ENCODE measurements at regions of chr5 and their contacts with region 1.

Region 1: GRCh38 chr5:34929150-34929719 is at the start of gene DNAJC21:
- DNase-seq: peak; percentile 94 to 99 (median 97)
- ATAC-seq: peak; percentile 89
- H3K4me3 ChIP-seq: peak within 1 kb of the TSS; percentile 88
- H3K4me3 Mint-ChIP-seq: peak within 1 kb of the TSS; percentile 99
- H3K27ac ChIP-seq: peak within 1 kb of the TSS; percentile 39 to 72
- H3K27ac Mint-ChIP-seq: peak within 1 kb of the TSS; percentile 95
- H3K4me1 ChIP-seq: peaks cover 21% of the 10 kb centered on the region
- H3K4me1 Mint-ChIP-seq: peaks cover 37% of the 10 kb centered on the region
- H3K27me3 ChIP-seq: no peaks in the 10 kb centered on the region
- H3K27me3 Mint-ChIP-seq: no peaks in the 10 kb centered on the region
- CTCF ChIP-seq: no peak
- total RNA-seq, gene DNAJC21: 47.9 to 50.4 TPM

Region 2: GRCh38 chr5:33401482-33402390 is 1527.5 kb before region 1 on chr5:
- CTCF ChIA-PET with region 1: no interaction called
- POLR2A ChIA-PET with region 1: no interaction called
- intact Hi-C with region 1: no loop called
- DNase-seq: no peak
- ATAC-seq: no peak
- H3K4me3 ChIP-seq: no peak overlapping the region
- H3K4me3 Mint-ChIP-seq: no peak overlapping the region
- H3K27ac ChIP-seq: no peak overlapping the region
- H3K27ac Mint-ChIP-seq: no peak overlapping the region
- H3K4me1 ChIP-seq: no peaks in the 10 kb centered on the region
- H3K4me1 Mint-ChIP-seq: no peaks in the 10 kb centered on the region
- H3K27me3 ChIP-seq: no peaks in the 10 kb centered on the region
- H3K27me3 Mint-ChIP-seq: no peaks in the 10 kb centered on the region
- CTCF ChIP-seq: no peak

Region 3: GRCh38 chr5:34639852-34640605 is 289.2 kb before region 1 on chr5:
- CTCF ChIA-PET with region 1: no interaction called
- POLR2A ChIA-PET with region 1: no interaction called
- intact Hi-C with region 1: no loop called
- DNase-seq: no peak
- ATAC-seq: no peak
- H3K4me3 ChIP-seq: no peak overlapping the region
- H3K4me3 Mint-ChIP-seq: no peak overlapping the region
- H3K27ac ChIP-seq: no peak overlapping the region
- H3K27ac Mint-ChIP-seq: no peak overlapping the region
- H3K4me1 ChIP-seq: no peaks in the 10 kb centered on the region
- H3K4me1 Mint-ChIP-seq: no peaks in the 10 kb centered on the region
- H3K27me3 ChIP-seq: no peaks in the 10 kb centered on the region
- H3K27me3 Mint-ChIP-seq: peaks cover 13% of the 10 kb centered on the region
- CTCF ChIP-seq: no peak

Region 4: GRCh38 chr5:34801949-34802348 is 127.3 kb before region 1 on chr5:
- CTCF ChIA-PET with region 1: no interaction called
- POLR2A ChIA-PET with region 1: no interaction called
- intact Hi-C with region 1: no loop called
- DNase-seq: no peak
- ATAC-seq: no peak
- H3K4me3 ChIP-seq: no peak overlapping the region
- H3K4me3 Mint-ChIP-seq: no peak overlapping the region
- H3K27ac ChIP-seq: no peak overlapping the region
- H3K27ac Mint-ChIP-seq: no peak overlapping the region
- H3K4me1 ChIP-seq: no peaks in the 10 kb centered on the region
- H3K4me1 Mint-ChIP-seq: no peaks in the 10 kb centered on the region
- H3K27me3 ChIP-seq: no peaks in the 10 kb centered on the region
- H3K27me3 Mint-ChIP-seq: no peaks in the 10 kb centered on the region
- CTCF ChIP-seq: no peak

Region 5: DNA sequence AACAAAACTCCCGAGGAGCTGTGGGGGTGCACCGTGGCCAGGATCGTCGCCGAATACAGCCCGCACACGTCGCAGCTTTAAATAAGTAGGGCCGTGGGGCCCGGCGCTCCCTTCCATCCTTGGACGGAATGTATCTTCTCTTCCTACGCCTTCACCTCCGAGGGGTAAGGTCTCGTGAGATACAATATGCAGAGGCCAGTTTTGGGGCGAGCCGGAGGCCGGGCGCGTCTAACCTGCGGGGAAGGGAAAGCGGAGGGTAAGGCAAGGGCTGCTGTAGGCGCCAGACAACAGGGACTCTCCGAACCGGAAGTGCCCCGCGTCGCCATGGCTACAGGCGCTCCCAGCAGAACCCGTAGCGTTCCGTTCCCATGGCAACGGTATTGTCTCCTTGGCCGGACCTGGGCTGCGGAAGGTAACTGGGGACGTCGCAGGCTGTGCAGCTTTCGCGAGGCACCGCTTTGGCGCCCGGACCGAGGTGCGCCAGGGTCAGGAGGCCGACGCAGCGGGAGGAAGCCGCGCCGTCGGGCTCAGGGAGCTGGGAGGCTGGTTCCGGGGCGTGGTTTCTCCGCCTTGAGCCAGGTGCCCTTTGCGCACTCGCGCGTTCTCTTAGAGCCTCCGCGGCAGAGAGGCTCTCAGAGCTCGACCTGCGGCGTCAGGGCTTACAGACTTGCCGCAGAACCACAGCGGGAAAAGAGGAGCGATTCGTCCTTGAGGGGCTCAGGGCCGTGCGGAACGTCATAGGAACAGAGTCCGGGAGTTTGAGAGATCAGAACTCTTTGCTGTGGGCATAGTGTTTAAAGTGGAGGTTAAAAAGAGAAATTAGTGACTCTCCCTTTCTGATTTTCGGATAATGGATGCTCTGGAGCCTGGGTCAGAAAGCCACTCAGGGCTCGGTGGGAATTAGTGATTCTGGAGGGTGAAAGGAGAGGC is 90.2 kb before region 1 on chr5 and contains the start of gene TTC23L:
- CTCF ChIA-PET with region 1: no interaction called
- POLR2A ChIA-PET with region 1: interaction called, 16 read pairs
- intact Hi-C with region 1: loop called in 1 of 2 experiments (anchors 2 kb)
- DNase-seq: peak; percentile 84 to 98 (median 87)
- ATAC-seq: peak; percentile 89
- H3K4me3 ChIP-seq: peak within 1 kb of the TSS; percentile 78
- H3K4me3 Mint-ChIP-seq: peak within 1 kb of the TSS; percentile 95
- H3K27ac ChIP-seq: peak within 1 kb of the TSS; percentile 63 to 76
- H3K27ac Mint-ChIP-seq: peak within 1 kb of the TSS; percentile 88
- H3K4me1 ChIP-seq: peaks cover 16% of the 10 kb centered on the region
- H3K4me1 Mint-ChIP-seq: peaks cover 17% of the 10 kb centered on the region
- H3K27me3 ChIP-seq: no peaks in the 10 kb centered on the region
- H3K27me3 Mint-ChIP-seq: peaks cover 8% of the 10 kb centered on the region
- CTCF ChIP-seq: no peak
- total RNA-seq, gene TTC23L: 0.20 TPM in 1 of 2 experiments, not detected in the other

Region 6: DNA sequence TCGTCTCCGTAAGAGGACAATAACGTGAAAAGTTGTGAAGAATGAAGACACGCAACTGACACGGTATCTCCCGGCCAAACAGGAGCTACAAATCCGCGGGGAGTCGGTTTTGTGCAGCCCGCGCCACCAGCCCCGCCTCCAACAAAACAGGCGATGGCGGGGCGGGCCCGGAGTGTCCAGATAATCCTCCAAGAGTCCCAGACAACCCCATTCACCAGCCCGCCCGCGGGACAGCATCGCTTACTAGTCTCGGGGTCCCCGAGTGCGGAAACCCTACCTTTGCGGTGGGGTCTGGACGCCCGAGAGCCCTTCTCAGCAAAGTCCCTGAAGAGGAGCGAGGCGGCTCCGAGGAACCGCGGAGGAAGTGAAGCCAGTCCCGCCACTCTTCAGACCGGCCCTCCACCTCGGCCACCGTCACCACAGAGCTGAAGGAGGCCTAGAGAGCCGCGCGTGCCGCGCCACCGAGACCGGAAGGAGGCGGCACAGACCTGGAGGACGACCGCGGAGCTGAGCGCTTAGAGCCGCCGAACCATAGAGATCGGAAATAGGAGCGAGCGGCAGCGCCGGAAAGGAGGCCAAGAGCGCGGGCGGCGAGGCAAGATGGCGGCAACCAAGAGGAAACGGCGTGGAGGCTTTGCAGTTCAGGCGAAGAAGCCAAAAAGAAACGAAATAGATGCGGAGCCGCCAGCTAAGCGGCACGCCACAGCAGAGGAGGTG is 13.9 kb before region 1 on chr5 and contains the starts of genes BRIX1 and RAD1:
- CTCF ChIA-PET with region 1: interaction called, 16 read pairs
- POLR2A ChIA-PET with region 1: interaction called, 217 read pairs
- intact Hi-C with region 1: loop called (anchors 1 kb)
- DNase-seq: peak; percentile 87 to 97 (median 90)
- ATAC-seq: peak; percentile 96
- H3K4me3 ChIP-seq: peak within 1 kb of the TSS; percentile 91
- H3K4me3 Mint-ChIP-seq: peak within 1 kb of the TSS; percentile 77
- H3K27ac ChIP-seq: peak within 1 kb of the TSS; percentile 84 to 88
- H3K27ac Mint-ChIP-seq: no peak within 1 kb of the TSS
- H3K4me1 ChIP-seq: peaks cover 27% of the 10 kb centered on the region
- H3K4me1 Mint-ChIP-seq: peaks cover 35% of the 10 kb centered on the region
- H3K27me3 ChIP-seq: no peaks in the 10 kb centered on the region
- H3K27me3 Mint-ChIP-seq: no peaks in the 10 kb centered on the region
- CTCF ChIP-seq: no peak
- total RNA-seq, gene BRIX1: 29.7 to 30.2 TPM
- total RNA-seq, gene RAD1: 26.7 to 29.2 TPM

Region 7: GRCh38 chr5:34941936-34942335 is 12.7 kb after region 1 on chr5:
- CTCF ChIA-PET with region 1: no interaction called
- POLR2A ChIA-PET with region 1: interaction called, 10 read pairs
- intact Hi-C with region 1: no loop called
- DNase-seq: no peak
- ATAC-seq: no peak
- H3K4me3 ChIP-seq: no peak overlapping the region
- H3K4me3 Mint-ChIP-seq: no peak overlapping the region
- H3K27ac ChIP-seq: no peak overlapping the region
- H3K27ac Mint-ChIP-seq: no peak overlapping the region
- H3K4me1 ChIP-seq: no peaks in the 10 kb centered on the region
- H3K4me1 Mint-ChIP-seq: no peaks in the 10 kb centered on the region
- H3K27me3 ChIP-seq: no peaks in the 10 kb centered on the region
- H3K27me3 Mint-ChIP-seq: no peaks in the 10 kb centered on the region
- CTCF ChIP-seq: no peak

Region 8: DNA sequence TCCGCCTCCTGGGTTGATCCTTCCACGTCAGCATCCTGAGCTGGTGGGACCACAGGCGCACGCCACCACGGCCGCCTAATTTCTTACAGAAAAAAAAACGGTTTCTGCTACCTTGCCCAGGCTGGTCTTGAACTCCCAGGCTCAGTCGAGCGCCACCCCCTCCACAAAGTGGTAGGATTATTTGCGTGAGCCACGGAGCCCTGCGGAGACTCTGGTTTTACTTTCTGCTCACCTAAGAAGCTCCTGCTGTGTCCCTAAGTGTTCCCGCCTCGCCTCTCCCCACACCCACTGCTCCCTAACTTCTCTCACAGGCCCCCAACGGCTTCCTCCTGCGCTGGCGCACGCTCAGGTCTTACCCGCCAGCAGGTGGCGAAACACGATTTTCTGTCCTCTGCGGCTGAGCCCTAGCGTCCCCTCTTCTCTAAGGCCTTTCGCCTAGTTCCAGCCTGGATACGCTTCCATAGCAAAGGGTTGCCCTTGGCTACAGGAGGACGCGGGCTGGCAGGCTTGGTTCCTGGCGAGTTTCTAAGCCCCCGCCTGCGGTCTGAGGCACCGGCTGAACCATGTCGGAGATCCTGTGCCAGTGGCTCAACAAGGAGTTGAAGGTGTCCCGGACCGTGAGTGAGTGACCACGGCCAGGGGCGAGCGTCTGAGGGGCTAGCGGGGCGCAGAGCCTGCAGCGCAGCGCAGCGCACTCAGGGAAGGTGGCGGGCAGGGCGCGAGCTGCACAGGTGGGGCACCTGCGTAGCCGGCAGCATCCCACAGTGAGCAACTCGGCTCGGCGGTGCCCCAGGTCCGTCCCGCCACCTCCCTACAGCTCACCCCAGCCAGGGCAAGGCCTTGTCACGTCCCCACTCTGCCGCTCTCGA is 688.4 kb after region 1 on chr5 and contains the start of gene SPEF2:
- CTCF ChIA-PET with region 1: no interaction called
- POLR2A ChIA-PET with region 1: no interaction called
- intact Hi-C with region 1: loop called in 1 of 2 experiments (anchors 10 kb)
- DNase-seq: peak; percentile 55 to 90 (median 68)
- ATAC-seq: peak; percentile 84
- H3K4me3 ChIP-seq: peak within 1 kb of the TSS; percentile 79
- H3K4me3 Mint-ChIP-seq: peak within 1 kb of the TSS; percentile 93
- H3K27ac ChIP-seq: peak within 1 kb of the TSS; percentile 11 to 27
- H3K27ac Mint-ChIP-seq: peak within 1 kb of the TSS; percentile 88
- H3K4me1 ChIP-seq: peaks cover 15% of the 10 kb centered on the region
- H3K4me1 Mint-ChIP-seq: peaks cover 33% of the 10 kb centered on the region
- H3K27me3 ChIP-seq: no peaks in the 10 kb centered on the region
- H3K27me3 Mint-ChIP-seq: no peaks in the 10 kb centered on the region
- CTCF ChIP-seq: peak; percentile 76
- total RNA-seq, gene SPEF2: 3.2 TPM

Region 9: DNA sequence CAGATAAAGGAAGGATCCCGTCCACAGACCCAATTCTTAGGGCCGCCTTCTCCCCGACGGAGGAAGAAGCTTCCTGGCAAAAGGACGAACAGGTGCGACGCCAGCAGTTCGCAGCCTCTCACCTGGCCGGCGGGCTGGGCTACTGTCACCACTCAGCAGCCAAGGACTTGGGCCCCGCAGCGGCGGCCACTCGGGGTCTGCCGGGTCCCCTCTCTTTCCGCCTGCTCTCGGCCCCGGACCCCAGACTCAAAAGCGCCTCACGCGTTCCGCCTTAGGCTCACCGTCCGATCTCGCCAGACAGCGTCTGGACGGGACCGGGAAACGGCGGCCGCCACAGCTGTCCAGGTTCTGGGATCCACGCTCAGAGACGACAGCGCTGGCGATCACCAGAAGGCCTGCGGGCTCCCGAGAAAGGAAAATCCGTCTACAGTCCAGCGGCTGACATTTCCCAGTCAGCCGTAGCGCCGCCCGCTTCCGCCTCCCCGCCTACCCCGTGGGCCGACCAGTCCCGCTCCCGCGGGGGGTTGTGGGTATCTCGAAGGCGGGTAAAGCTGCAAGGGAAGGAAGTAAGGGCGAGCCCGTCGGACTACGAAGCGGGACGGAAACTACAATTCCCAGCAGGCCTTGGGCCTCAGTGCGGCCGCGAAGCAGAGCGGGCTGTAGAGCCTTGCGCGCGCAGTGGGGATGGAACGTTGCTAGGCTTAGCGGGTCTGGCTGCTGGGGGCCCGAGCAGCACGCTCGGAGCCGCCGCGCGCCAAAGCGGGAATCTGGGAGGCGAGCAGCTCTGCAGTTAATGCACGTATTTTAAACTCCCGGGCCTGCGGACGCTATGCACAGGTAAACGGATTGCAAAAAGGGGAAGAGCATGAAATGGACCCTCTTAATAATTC is 1222.4 kb after region 1 on chr5 and contains the starts of genes LMBRD2 and SKP2:
- CTCF ChIA-PET with region 1: no interaction called
- POLR2A ChIA-PET with region 1: interaction called, 15 read pairs
- intact Hi-C with region 1: loop called (anchors 5 kb)
- DNase-seq: peak; percentile 90 to 99 (median 95)
- ATAC-seq: peak; percentile 96
- H3K4me3 ChIP-seq: peak within 1 kb of the TSS; percentile 92
- H3K4me3 Mint-ChIP-seq: peak within 1 kb of the TSS; percentile 95
- H3K27ac ChIP-seq: peak within 1 kb of the TSS; percentile 77 to 82
- H3K27ac Mint-ChIP-seq: peak within 1 kb of the TSS; percentile 86
- H3K4me1 ChIP-seq: peaks cover 30% of the 10 kb centered on the region
- H3K4me1 Mint-ChIP-seq: peaks cover 76% of the 10 kb centered on the region
- H3K27me3 ChIP-seq: no peaks in the 10 kb centered on the region
- H3K27me3 Mint-ChIP-seq: no peaks in the 10 kb centered on the region
- CTCF ChIP-seq: no peak
- total RNA-seq, gene LMBRD2: 4.1 to 4.2 TPM
- total RNA-seq, gene SKP2: 6.3 to 7.2 TPM